Activated CD8-positive, alpha-beta memory T cell treated with anti-CD3 and anti-CD28 coated beads, Interleukin-2, amount 10 ng/mL, durations not matched to agents 7 days and 5 days (primary cell): ENCODE measurements at regions of chr6 and their contacts with region 1.

Region 1: GRCh38 chr6:8983188-8983688 is 547.9 kb upstream of the SLC35B3 start:
- DNase-seq: peak; percentile 64
- ATAC-seq: peak; percentile 53
- H3K4me3 Mint-ChIP-seq: no peak overlapping the region
- H3K27ac Mint-ChIP-seq: no peak overlapping the region
- H3K4me1 Mint-ChIP-seq: no peaks in the 10 kb centered on the region
- H3K27me3 Mint-ChIP-seq: peaks cover 2% of the 10 kb centered on the region

Region 2: DNA sequence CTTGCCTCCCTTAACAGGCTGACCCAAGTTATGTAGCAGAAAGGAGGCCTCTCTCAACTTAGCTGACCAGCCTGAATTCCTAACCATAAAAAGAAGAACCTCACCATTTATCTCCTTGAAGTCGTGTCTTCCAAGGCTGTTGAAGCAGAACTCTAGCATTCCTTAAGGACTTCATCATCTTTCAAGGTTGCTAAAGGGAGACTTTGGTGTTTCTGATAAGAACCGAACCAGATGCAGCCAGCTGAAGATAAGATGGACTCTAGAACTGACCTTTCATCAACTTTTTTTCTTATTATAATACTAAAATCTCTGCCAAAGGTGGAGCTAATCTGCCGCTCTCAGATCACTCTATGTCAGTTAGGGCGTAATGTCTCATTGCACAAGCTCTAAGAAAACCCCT is 23.8 kb after region 1 on chr6:
- CTCF ChIA-PET with region 1: no interaction called
- DNase-seq: no peak
- ATAC-seq: no peak
- H3K4me3 Mint-ChIP-seq: no peak overlapping the region
- H3K27ac Mint-ChIP-seq: no peak overlapping the region
- H3K4me1 Mint-ChIP-seq: no peaks in the 10 kb centered on the region
- H3K27me3 Mint-ChIP-seq: no peaks in the 10 kb centered on the region

Region 3: GRCh38 chr6:10429638-10430427 is 1446.6 kb after region 1 on chr6:
- CTCF ChIA-PET with region 1: interaction called, 19 read pairs
- DNase-seq: no peak
- ATAC-seq: peak; percentile 58
- H3K4me3 Mint-ChIP-seq: peak overlapping the region; percentile 37
- H3K27ac Mint-ChIP-seq: peak overlapping the region; percentile 6
- H3K4me1 Mint-ChIP-seq: peaks cover 26% of the 10 kb centered on the region
- H3K27me3 Mint-ChIP-seq: peaks cover 44% of the 10 kb centered on the region

Region 4: GRCh38 chr6:10434692-10435376 is 1451.6 kb after region 1 on chr6:
- CTCF ChIA-PET with region 1: interaction called, 19 read pairs
- DNase-seq: no peak
- ATAC-seq: no peak
- H3K4me3 Mint-ChIP-seq: no peak overlapping the region
- H3K27ac Mint-ChIP-seq: no peak overlapping the region
- H3K4me1 Mint-ChIP-seq: peaks cover 13% of the 10 kb centered on the region
- H3K27me3 Mint-ChIP-seq: peaks cover 8% of the 10 kb centered on the region